CD8-positive, alpha-beta memory T cell (primary cell): ENCODE measurements at regions of chr15 and their contacts with region 1.

Region 1: DNA sequence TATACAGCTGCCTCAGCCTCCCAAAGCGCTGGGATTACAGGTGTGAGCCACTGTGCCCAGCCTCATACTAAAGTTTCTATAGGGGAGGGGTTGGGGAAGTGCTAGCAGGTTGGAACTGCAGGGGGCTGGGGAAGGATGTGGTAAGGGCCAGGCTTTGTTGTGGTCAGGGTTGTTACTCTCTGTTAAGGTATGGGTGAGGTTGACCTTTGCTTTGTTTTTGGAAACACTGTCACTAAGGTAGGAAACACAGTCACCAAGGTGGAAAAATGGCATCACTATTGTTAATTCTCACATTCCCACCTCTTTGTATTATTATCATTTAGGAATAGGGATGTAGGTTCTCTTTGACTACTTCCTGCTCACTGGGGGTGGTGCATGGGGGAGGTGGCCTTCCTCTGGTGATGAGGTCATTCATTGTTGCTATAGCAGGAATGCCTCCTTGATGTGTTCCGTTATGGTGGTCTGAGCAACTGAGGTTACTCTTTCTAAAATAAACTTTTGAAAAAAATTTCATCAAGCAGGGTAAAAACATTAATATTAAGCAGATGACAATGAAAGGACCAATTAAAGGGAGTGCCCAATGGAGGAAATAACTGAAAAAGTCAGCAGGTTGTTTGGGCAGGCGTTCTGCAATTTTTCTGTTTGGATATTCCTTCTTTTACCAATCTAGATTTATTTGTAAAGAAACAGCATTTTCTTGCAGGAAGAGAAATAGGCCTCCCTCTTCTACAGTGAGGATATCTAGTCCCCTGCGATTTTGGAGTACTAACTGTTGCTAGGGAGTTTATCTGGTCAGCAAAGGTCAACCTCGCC is 150.5 kb downstream of the WDR76 start:
- DNase-seq: peak in 3 of 5 donors; percentile 13 to 63 (median 51)
- H3K4me3 ChIP-seq: no peak overlapping the region
- H3K4me3 Mint-ChIP-seq: peak overlapping the region in 4 of 7 donors; percentile 9 to 44 (median 22)
- H3K27ac ChIP-seq: no peak overlapping the region
- H3K27ac Mint-ChIP-seq: peak overlapping the region in 2 of 8 donors; percentile 29 to 48
- H3K4me1 ChIP-seq: peaks cover 5% of the 10 kb centered on the region
- H3K4me1 Mint-ChIP-seq: peaks cover 12 to 36% (median 16%) of the 10 kb centered on the region in 3 donors
- H3K27me3 ChIP-seq: peaks cover 3% of the 10 kb centered on the region
- H3K27me3 Mint-ChIP-seq: peaks cover 4 to 24% of the 10 kb centered on the region in 2 donors

Region 2: DNA sequence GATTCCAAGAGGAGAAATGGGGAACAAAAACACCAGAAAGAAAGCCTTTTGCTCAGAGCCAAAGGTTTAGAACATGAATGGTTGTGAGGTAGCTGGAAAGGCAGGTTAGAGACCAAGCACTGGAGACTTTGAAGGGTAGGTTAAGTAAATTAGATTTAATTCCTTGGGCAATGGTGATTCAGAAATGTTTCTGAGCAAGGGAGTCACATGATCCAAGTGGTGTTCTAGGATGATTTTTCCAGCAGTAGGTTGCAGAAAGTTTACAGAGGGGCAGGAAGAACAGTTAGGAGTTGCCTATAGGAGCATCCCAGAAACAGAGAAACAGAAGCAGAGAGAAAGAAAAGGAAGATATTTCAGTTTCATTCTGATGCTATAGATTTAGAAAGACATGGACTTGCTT is 10.6 kb before region 1 on chr15:
- CTCF ChIA-PET with region 1: no interaction called
- POLR2A ChIA-PET with region 1: interaction called, 10 read pairs
- DNase-seq: no peak
- H3K4me3 ChIP-seq: no peak overlapping the region
- H3K4me3 Mint-ChIP-seq: no peak overlapping the region
- H3K27ac ChIP-seq: no peak overlapping the region
- H3K27ac Mint-ChIP-seq: no peak overlapping the region
- H3K4me1 ChIP-seq: no peaks in the 10 kb centered on the region
- H3K4me1 Mint-ChIP-seq: no peaks in the 10 kb centered on the region
- H3K27me3 ChIP-seq: no peaks in the 10 kb centered on the region
- H3K27me3 Mint-ChIP-seq: peaks cover 0 to 4% of the 10 kb centered on the region in 2 donors